B cell (primary cell): ENCODE measurements at regions of chr2 and their contacts with region 1.

Region 1: DNA sequence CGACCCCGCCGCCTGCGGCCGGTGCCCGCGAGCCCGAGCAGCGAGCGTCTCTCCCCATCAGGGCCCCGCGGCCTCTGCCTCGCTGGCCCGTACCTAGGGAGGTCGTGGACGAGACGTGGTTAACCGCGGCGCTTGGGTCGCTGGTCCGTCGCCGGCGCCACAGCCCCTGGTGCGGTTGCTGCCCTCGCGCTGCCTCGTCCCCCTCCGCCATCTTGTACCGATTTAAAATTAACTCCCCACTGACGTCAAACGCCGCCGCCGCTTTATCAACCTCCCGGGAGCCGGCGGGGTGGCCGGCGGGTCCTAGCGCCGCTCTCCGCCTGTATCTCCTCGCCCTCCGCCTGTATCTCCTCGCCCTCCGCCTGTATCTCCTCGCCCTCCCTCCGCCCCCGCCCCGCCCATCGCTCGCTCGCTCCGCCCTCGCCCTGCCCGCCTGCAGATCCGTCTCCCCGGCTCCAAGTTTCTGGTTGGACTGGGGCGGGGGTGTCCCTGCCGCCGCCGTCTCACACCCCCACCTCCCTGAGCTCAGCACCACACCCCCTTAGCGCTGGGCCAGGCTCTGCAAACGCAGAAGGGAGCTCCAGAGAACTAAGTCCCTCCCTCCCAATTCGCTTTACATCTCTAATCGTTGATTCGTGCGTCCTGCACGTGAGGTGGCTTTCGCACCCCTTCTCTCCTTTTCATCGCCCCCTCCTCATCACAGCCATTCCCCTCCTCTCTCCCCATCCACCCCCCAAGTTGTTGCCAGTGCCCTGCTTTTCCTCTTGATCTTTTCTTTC is at the start of gene ATL2:
- DNase-seq: peak; percentile 95
- ATAC-seq: peak; percentile 83
- H3K4me3 ChIP-seq: peak within 1 kb of the TSS; percentile 78 to 91 (median 87)
- H3K4me3 Mint-ChIP-seq: peak within 1 kb of the TSS; percentile 98
- H3K27ac ChIP-seq: peak within 1 kb of the TSS; percentile 91
- H3K27ac Mint-ChIP-seq: peak within 1 kb of the TSS; percentile 96
- H3K4me1 ChIP-seq: peaks cover 17 to 23% of the 10 kb centered on the region in 2 donors
- H3K4me1 Mint-ChIP-seq: peaks cover 50% of the 10 kb centered on the region
- H3K27me3 ChIP-seq: no peaks in the 10 kb centered on the region
- H3K27me3 Mint-ChIP-seq: no peaks in the 10 kb centered on the region
- CTCF ChIP-seq: no peak
- total RNA-seq, gene ATL2: 69.0 and 78.0 TPM in 2 replicates

Region 2: GRCh38 chr2:36597532-36598377 is 1779.5 kb before region 1 on chr2 and contains the start of gene FEZ2:
- CTCF ChIA-PET with region 1: no interaction called
- POLR2A ChIA-PET with region 1: no interaction called
- intact Hi-C with region 1: loop called (anchors 5 kb)
- DNase-seq: peak; percentile 77
- ATAC-seq: peak; percentile 91
- H3K4me3 ChIP-seq: peak within 1 kb of the TSS; percentile 41 to 77 (median 71)
- H3K4me3 Mint-ChIP-seq: peak within 1 kb of the TSS; percentile 96
- H3K27ac ChIP-seq: peak within 1 kb of the TSS; percentile 22 to 33
- H3K27ac Mint-ChIP-seq: peak within 1 kb of the TSS; percentile 91
- H3K4me1 ChIP-seq: peaks cover 11 to 18% of the 10 kb centered on the region in 2 donors
- H3K4me1 Mint-ChIP-seq: peaks cover 34% of the 10 kb centered on the region
- H3K27me3 ChIP-seq: no peaks in the 10 kb centered on the region
- H3K27me3 Mint-ChIP-seq: no peaks in the 10 kb centered on the region
- CTCF ChIP-seq: no peak
- total RNA-seq, gene FEZ2: 27.4 and 32.7 TPM in 2 replicates

Region 3: GRCh38 chr2:37389989-37390765 is 987.1 kb before region 1 on chr2:
- CTCF ChIA-PET with region 1: no interaction called
- POLR2A ChIA-PET with region 1: no interaction called
- intact Hi-C with region 1: loop called (anchors 5 kb)
- DNase-seq: peak; percentile 91
- ATAC-seq: peak; percentile 93
- H3K4me3 ChIP-seq: peak overlapping the region in 1 of 5 experiments; percentile 40
- H3K4me3 Mint-ChIP-seq: peak overlapping the region; percentile 81
- H3K27ac ChIP-seq: peak overlapping the region; percentile 91 to 93
- H3K27ac Mint-ChIP-seq: no peak overlapping the region
- H3K4me1 ChIP-seq: peaks cover 37 to 38% of the 10 kb centered on the region in 2 donors
- H3K4me1 Mint-ChIP-seq: peaks cover 3% of the 10 kb centered on the region
- H3K27me3 ChIP-seq: no peaks in the 10 kb centered on the region
- H3K27me3 Mint-ChIP-seq: no peaks in the 10 kb centered on the region
- CTCF ChIP-seq: no peak

Region 4: DNA sequence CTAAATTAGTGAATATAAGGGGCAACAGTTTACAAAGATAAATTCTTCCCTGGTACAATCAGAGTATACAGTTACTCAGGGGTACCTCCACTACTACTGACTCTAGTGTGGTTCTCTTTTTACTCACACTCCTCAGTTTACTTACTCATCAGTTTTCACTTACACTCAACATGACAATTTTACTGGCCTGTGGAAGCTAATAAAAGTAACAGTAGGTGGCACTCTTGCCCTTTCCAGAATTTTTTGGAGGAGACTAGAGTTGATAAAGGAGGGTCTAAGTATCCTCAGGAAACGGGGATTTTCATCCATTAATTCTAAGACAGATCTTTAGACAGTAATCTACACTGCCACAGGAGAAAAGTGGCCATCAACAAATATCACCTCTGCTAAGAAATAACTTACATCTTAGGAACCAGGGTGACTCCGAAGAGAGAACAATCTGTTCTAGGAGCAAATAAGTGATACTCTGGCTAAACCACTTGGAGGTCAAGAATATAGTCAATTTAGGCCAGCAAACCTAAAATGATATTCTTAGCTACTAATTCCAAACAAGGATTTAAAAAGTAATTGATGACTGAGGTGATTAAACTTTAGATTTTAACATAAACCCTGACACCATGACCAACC is 61.4 kb before region 1 on chr2:
- CTCF ChIA-PET with region 1: interaction called, 25 read pairs
- POLR2A ChIA-PET with region 1: interaction called, 4 read pairs
- intact Hi-C with region 1: loop called (anchors 2 kb)
- DNase-seq: peak; percentile 61
- ATAC-seq: peak; percentile 47
- H3K4me3 ChIP-seq: no peak overlapping the region
- H3K4me3 Mint-ChIP-seq: no peak overlapping the region
- H3K27ac ChIP-seq: no peak overlapping the region
- H3K27ac Mint-ChIP-seq: no peak overlapping the region
- H3K4me1 ChIP-seq: no peaks in the 10 kb centered on the region
- H3K4me1 Mint-ChIP-seq: no peaks in the 10 kb centered on the region
- H3K27me3 ChIP-seq: no peaks in the 10 kb centered on the region
- H3K27me3 Mint-ChIP-seq: no peaks in the 10 kb centered on the region
- CTCF ChIP-seq: peak; percentile 76

Region 5: GRCh38 chr2:38474715-38475566 is 97.7 kb after region 1 on chr2:
- CTCF ChIA-PET with region 1: no interaction called
- POLR2A ChIA-PET with region 1: no interaction called
- intact Hi-C with region 1: no loop called
- DNase-seq: no peak
- ATAC-seq: no peak
- H3K4me3 ChIP-seq: no peak overlapping the region
- H3K4me3 Mint-ChIP-seq: no peak overlapping the region
- H3K27ac ChIP-seq: no peak overlapping the region
- H3K27ac Mint-ChIP-seq: no peak overlapping the region
- H3K4me1 ChIP-seq: no peaks in the 10 kb centered on the region
- H3K4me1 Mint-ChIP-seq: no peaks in the 10 kb centered on the region
- H3K27me3 ChIP-seq: peaks cover 0 to 8% (median 0%) of the 10 kb centered on the region in 4 experiments
- H3K27me3 Mint-ChIP-seq: peaks cover 23% of the 10 kb centered on the region
- CTCF ChIP-seq: no peak

Region 6: GRCh38 chr2:38535744-38536506 is 158.7 kb after region 1 on chr2:
- CTCF ChIA-PET with region 1: interaction called, 11 read pairs
- POLR2A ChIA-PET with region 1: no interaction called
- intact Hi-C with region 1: loop called (anchors 2 kb)
- DNase-seq: peak; percentile 85
- ATAC-seq: peak; percentile 54
- H3K4me3 ChIP-seq: peak overlapping the region in 4 of 5 experiments; percentile 40 to 79 (median 52)
- H3K4me3 Mint-ChIP-seq: peak overlapping the region; percentile 78
- H3K27ac ChIP-seq: no peak overlapping the region
- H3K27ac Mint-ChIP-seq: peak overlapping the region; percentile 37
- H3K4me1 ChIP-seq: peaks cover 28 to 39% of the 10 kb centered on the region in 2 donors
- H3K4me1 Mint-ChIP-seq: peaks cover 34% of the 10 kb centered on the region
- H3K27me3 ChIP-seq: peaks cover 0 to 7% (median 1%) of the 10 kb centered on the region in 4 experiments
- H3K27me3 Mint-ChIP-seq: peaks cover 23% of the 10 kb centered on the region
- CTCF ChIP-seq: peak; percentile 90

Region 7: DNA sequence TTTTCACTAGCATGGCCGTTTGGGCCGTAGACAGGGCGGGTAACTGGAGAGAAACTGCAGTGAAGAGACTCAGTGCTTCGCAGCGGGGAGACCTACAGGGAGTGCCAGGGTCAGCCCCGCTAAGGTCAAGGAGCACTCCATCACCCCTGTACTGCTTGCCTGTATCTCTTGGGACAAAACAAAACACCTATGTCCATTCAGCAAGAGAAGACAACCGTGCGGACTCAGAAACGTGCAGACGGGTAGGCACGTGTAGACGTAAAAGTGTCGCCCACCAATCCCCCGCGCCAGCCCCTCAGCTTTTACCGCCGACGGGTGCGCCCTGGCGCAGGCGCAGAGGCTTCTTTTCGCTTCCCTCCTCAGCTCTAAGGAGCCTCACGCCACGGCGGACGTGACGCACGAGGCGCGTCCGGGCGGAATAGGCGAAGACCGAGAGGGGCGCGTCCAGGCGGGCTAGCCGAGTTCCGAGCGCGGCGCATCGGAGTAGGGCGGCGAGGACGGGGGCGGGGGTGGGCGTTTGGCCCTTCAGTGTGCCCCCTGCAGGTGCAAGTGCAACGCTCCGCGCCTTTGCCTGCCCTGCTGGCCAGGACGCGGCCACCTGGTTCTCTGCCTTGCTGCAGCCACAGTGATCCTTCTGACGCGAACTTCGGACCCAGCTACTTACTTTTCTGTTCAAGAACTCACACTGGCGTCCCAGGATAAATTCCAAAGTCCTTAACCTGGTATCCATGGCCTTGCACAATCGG is 746.9 kb after region 1 on chr2:
- CTCF ChIA-PET with region 1: interaction called, 3 read pairs
- POLR2A ChIA-PET with region 1: no interaction called
- intact Hi-C with region 1: loop called (anchors 2 kb)
- DNase-seq: peak; percentile 97
- ATAC-seq: peak; percentile 73
- H3K4me3 ChIP-seq: peak overlapping the region; percentile 72 to 96 (median 85)
- H3K4me3 Mint-ChIP-seq: peak overlapping the region; percentile 86
- H3K27ac ChIP-seq: peak overlapping the region; percentile 87 to 94
- H3K27ac Mint-ChIP-seq: peak overlapping the region; percentile 86
- H3K4me1 ChIP-seq: peaks cover 42 to 43% of the 10 kb centered on the region in 2 donors
- H3K4me1 Mint-ChIP-seq: peaks cover 54% of the 10 kb centered on the region
- H3K27me3 ChIP-seq: no peaks in the 10 kb centered on the region
- H3K27me3 Mint-ChIP-seq: no peaks in the 10 kb centered on the region
- CTCF ChIP-seq: peak; percentile 82